ENCODE measurements at regions of chr9 and their contacts with region 1.

Region 1: DNA sequence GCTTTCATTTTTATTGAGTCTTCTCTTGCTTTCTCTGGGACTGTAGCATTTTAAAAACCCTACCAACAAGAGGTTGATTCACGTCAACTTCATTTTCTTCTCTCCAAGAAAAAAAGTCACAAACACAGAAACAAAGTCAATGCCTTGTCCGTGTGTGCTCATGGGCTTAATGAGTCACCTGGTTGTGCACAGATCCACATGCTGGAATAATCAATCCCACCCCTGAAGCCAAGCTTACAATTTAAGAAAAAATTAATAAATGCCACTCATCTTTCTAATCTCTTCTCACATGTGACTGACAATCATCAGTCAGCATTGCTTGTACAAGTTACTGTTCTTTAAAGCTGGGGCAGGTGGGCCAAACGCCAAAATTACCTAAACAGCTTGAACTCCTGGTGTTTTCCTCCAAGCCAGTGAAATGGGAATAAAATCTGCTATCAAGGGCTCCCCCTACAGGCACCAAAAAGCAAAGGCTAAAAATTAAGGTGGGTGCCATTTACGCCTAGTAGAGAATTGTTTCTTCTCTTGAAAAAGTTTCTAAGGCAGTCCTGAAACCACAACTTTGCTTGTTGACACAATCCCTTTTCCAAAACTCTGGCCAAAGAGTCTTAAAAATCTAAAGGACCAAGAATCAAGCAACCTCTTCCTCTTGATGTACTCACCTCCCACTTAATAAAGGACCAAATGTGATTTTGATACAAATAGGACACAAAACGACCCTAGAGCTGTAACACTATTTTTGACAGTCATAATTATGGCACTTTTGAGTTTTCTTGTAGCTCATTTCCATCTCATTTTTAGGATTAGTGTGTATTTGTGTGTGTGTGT is 21.3 kb downstream of the TRMO start:
- DNase-seq: no peak
- H3K4me3 ChIP-seq: no peak overlapping the region
- H3K27me3 ChIP-seq: no peaks in the 10 kb centered on the region
- CTCF ChIP-seq: peak; percentile 77

Region 2: GRCh38 chr9:97703437-97704344 is 197.3 kb before region 1 on chr9:
- CTCF ChIA-PET with region 1: interaction called, 30 read pairs
- POLR2A ChIA-PET with region 1: no interaction called
- DNase-seq: no peak
- H3K4me3 ChIP-seq: no peak overlapping the region
- H3K27me3 ChIP-seq: peaks cover 5% of the 10 kb centered on the region
- CTCF ChIP-seq: no peak

Region 3: DNA sequence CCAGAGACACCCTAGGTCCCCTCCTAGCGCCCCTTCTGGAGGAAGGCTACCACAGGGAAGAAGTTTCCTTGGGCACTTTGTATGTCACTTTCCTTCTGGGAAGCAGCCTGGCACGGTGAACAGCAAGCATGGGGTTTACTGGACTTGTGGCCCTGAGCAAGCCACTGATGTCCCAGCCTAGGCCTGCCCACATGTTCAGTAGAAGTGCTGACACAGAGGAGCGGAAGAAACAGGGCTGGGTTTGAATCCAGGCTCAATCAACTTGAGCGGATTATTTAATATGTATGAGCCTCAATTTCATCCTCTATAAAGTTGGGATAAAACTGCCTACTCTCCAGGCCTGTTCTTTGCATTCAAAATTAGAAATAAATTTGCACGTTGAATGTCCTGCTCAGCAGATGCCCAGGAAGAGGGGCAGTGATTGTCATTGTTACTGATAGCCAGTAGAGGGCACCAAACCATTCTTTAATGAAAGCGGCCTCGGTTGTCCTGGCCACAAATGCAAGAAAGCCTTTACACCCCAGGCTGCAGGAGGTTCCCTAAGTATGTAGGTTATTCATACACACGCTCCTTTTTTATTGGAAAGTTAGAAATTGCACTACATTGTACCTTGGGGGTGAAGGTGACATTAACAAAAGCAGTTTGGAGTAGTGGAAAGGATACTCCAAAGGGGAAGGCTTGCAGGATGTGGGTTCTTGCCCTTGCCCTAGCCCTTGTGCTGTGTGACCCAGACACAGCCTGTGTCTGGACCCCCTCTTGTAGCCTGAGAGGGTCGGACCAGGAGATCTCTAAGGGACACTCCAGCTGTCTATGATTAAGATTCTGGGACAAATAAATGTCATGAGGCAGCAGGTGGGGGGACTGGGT is 190.4 kb before region 1 on chr9:
- CTCF ChIA-PET with region 1: interaction called, 68 read pairs
- POLR2A ChIA-PET with region 1: no interaction called
- DNase-seq: no peak
- H3K4me3 ChIP-seq: no peak overlapping the region
- H3K27me3 ChIP-seq: peaks cover 5% of the 10 kb centered on the region; the same call in 1 of the 2 replicates
- CTCF ChIP-seq: peak; percentile 75

Region 4: GRCh38 chr9:97890038-97890437 is 10.9 kb before region 1 on chr9:
- CTCF ChIA-PET with region 1: interaction called, 68 read pairs
- POLR2A ChIA-PET with region 1: no interaction called
- DNase-seq: no peak
- H3K4me3 ChIP-seq: no peak overlapping the region
- H3K27me3 ChIP-seq: no peaks in the 10 kb centered on the region
- CTCF ChIP-seq: peak; percentile 63

Region 5: DNA sequence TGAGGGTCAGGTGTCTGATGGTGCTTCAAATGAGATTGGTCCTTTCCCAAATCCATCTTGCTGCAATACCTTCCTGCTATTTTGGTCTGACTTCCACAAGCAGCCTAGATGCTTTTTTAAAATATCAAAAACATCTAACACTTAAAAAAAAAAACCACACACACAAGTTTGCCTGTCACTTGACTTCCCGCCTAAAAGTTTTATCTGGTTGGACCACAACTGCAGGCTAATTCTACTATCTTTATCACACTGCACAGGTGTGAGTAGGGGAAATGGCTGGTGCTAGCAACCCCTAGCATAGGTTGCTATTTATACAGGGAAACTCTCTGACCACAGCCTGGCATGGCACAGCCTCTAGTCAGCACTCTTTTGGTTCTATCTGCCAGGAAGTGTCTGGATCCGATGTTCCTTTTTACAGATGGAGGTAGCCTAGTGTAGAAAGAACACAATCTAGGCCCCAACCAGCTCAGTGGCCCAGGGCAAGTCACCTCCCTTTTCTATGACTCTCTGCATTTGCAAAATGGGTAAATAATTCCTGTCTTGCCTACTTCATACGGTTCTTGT is 37.2 kb after region 1 on chr9 and contains the start of gene HEMGN:
- CTCF ChIA-PET with region 1: no interaction called
- POLR2A ChIA-PET with region 1: no interaction called
- DNase-seq: no peak
- H3K4me3 ChIP-seq: no peak within 1 kb of the TSS
- H3K27me3 ChIP-seq: peaks cover 32% of the 10 kb centered on the region
- CTCF ChIP-seq: no peak
- polyA plus RNA-seq, gene HEMGN: not detected in 2 replicates

Region 6: DNA sequence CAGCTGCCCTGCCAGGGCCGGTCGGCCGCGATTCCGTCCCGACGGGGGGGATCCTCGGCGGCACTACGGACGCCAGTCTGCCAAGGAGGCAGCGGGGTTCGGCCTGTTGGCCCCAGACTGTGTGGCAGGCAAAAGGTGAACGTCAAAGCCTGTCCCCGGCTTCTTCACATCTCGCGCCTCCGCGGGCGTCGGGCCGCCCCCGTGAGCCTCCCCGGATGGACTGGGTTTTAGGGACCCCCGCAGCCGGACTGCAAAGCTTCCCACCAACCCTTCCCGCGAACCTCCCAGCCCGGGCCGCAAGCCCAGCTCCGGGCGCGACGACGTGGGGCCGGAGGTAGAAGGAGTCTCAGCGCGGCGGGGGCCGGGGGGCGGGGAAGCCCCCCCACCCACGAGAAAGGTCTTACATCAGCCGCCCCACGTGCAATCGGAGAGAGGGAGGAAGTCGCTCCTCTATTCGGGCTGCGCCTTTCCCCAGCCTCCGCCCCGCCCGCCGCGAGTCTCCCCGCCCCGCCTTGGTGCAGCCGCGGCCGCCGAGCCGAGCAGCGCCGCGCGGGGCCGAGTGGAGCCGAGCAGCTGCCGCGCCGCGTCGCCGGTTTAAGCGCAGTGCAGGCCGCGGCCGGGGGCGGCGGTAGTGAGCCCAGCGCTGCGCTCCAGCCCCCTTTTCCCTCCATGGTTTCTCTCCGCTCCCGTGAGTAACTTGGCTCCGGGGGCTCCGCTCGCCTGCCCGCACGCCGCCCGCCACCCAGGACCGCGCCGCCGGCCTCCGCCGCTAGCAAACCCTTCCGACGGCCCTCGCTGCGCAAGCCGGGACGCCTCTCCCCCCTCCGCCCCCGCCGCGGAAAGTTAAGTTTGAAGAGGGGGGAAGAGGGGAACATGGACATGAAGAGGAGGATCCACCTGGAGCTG is 82.0 kb after region 1 on chr9 and contains the start of gene ANP32B:
- CTCF ChIA-PET with region 1: no interaction called
- POLR2A ChIA-PET with region 1: no interaction called
- DNase-seq: peak; percentile 54
- H3K4me3 ChIP-seq: peak within 1 kb of the TSS; percentile 88
- H3K27me3 ChIP-seq: no peaks in the 10 kb centered on the region; the same call in 1 of the 2 replicates
- CTCF ChIP-seq: peak; percentile 61
- polyA plus RNA-seq, gene ANP32B: 18.3 and 40.5 TPM in 2 replicates

Region 7: DNA sequence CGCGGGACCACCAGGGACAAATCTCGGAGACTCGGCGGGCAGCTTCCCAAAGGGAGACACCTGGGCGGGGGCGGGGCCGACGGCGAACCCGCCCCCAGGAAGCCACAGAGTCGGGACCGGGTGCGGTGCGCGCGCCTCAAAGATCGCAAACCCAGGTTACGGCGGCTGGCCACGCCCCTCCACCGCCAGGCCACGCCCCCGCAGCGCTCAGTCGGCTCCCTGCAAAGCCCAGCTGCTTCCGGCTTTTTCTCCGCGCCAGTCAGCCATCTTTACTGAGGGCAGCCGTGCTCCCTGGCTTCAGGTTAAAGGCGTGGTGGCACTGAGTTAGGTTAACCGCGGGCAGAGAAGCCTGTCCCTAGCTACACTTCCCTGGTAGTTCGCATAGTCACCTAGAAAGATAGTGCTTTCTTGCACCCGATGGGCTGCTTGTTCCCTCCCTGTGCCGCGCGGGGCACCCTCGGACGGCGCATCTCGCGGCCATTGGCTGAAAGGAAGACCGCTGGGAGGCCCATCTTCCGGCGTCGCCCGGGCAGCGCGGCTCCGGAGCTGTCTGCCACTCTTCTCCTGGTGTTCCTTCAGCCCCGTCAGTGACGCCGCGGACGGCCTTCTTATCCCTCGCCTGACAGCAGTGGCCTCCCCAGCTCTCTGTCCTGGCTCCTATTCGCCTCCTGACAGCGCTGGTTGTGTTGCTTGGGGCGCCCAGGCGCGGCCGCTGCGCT is 354.8 kb after region 1 on chr9 and contains the start of gene TBC1D2:
- CTCF ChIA-PET with region 1: no interaction called
- POLR2A ChIA-PET with region 1: no interaction called
- DNase-seq: peak; percentile 70
- H3K4me3 ChIP-seq: peak within 1 kb of the TSS; percentile 80
- H3K27me3 ChIP-seq: no peaks in the 10 kb centered on the region
- CTCF ChIP-seq: peak; percentile 40
- polyA plus RNA-seq, gene TBC1D2: 38.8 and 70.3 TPM in 2 replicates